ENCODE measurements at regions of chr11 and their contacts with region 1.

Region 1: GRCh38 chr11:60970369-60970774 is 1.1 kb upstream of the CD6 start:
- DNase-seq: peak; percentile 68
- ATAC-seq: peak; percentile 91
- H3K4me3 Mint-ChIP-seq: no peak overlapping the region
- H3K27ac Mint-ChIP-seq: peak overlapping the region; percentile 32
- H3K4me1 Mint-ChIP-seq: peaks cover 31% of the 10 kb centered on the region
- H3K27me3 Mint-ChIP-seq: no peaks in the 10 kb centered on the region
- CTCF ChIP-seq: peak; percentile 88

Region 2: DNA sequence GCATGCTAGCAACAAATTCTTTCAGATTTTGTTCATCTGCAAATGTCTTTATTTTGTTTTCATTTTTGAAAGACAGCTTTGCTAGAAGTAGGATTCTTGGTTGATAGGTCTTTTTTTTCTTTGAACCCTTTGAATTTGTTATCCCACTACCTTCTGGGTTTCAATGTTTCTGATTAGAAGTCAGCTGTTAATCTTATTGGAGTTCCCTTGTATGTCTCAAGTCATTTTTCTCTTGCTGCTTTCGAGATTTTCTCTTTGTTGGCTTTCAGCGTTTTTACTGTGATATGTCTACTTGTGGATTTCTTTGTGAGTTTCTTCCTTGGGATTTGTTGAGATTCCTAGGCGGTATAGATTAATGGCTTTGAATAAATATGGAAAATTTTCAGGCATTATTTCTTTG is 298.1 kb before region 1 on chr11:
- CTCF ChIA-PET with region 1: no interaction called
- POLR2A ChIA-PET with region 1: no interaction called
- intact Hi-C with region 1: no loop called
- DNase-seq: no peak
- ATAC-seq: no peak
- H3K4me3 Mint-ChIP-seq: no peak overlapping the region
- H3K27ac Mint-ChIP-seq: no peak overlapping the region
- H3K4me1 Mint-ChIP-seq: no peaks in the 10 kb centered on the region
- H3K27me3 Mint-ChIP-seq: peaks cover 1% of the 10 kb centered on the region
- CTCF ChIP-seq: no peak

Region 3: GRCh38 chr11:60951899-60952741 is 18.3 kb before region 1 on chr11 and contains the start of gene SLC15A3:
- CTCF ChIA-PET with region 1: interaction called, 5 read pairs
- POLR2A ChIA-PET with region 1: interaction called, 5 read pairs
- intact Hi-C with region 1: loop called (anchors 2 kb)
- DNase-seq: peak; percentile 62
- ATAC-seq: peak; percentile 88
- H3K4me3 Mint-ChIP-seq: peak within 1 kb of the TSS; percentile 91
- H3K27ac Mint-ChIP-seq: peak within 1 kb of the TSS; percentile 91
- H3K4me1 Mint-ChIP-seq: peaks cover 57% of the 10 kb centered on the region
- H3K27me3 Mint-ChIP-seq: no peaks in the 10 kb centered on the region
- CTCF ChIP-seq: no peak
- total RNA-seq, gene SLC15A3: 76.4 and 77.8 TPM in 2 replicates

Region 4: GRCh38 chr11:61021661-61022212 is 51.4 kb after region 1 on chr11:
- CTCF ChIA-PET with region 1: interaction called, 3 read pairs
- POLR2A ChIA-PET with region 1: no interaction called
- intact Hi-C with region 1: loop called (anchors 1 kb)
- DNase-seq: peak; percentile 62
- ATAC-seq: peak; percentile 86
- H3K4me3 Mint-ChIP-seq: peak overlapping the region; percentile 74
- H3K27ac Mint-ChIP-seq: peak overlapping the region; percentile 83
- H3K4me1 Mint-ChIP-seq: peaks cover 56% of the 10 kb centered on the region
- H3K27me3 Mint-ChIP-seq: no peaks in the 10 kb centered on the region
- CTCF ChIP-seq: no peak

Region 5: DNA sequence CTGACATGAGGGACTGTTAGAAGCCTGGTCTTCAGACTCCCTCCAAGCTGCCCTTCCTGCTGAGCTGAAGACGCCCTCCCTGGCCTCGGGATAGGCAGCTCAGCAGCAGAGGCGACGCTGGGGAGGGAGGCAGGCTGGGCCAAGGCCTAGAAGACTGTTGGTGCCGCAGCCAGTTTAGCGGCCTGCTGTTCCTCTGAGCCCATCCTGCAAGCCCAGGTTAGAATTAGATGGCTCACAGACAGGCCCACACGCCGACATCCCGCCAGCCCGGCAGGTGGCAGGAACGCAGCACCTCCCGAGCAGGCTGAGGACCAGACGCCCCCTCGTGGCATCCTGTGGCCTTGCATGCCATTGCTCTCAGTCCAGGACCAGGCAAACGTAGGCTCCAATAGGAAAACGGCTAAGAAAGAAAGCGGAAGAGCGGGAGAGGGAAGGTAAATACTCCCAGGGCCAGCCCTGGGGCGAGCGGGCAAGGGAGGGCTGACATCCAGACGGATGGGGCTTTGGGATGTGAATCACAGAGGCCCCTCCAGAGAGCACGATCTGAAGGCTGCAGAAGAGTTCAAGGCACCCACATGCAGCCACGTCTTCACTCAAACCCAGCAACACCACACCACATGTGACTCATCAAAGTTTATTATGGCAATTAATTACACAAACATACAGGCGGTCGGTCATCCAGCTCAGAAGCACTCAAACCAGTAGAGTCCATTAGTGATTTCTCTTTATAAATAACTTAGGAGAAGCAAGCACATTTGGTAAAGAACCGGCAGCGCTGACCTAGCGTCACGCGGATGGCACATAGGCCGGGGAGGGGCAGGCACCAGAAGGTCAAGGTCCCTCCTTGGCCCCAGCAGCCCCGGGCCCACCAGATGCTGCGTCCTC is 159.5 kb after region 1 on chr11:
- CTCF ChIA-PET with region 1: interaction called, 4 read pairs
- POLR2A ChIA-PET with region 1: no interaction called
- intact Hi-C with region 1: loop called (anchors 1 kb)
- DNase-seq: peak; percentile 82
- ATAC-seq: peak; percentile 100
- H3K4me3 Mint-ChIP-seq: no peak overlapping the region
- H3K27ac Mint-ChIP-seq: peak overlapping the region; percentile 6
- H3K4me1 Mint-ChIP-seq: peaks cover 8% of the 10 kb centered on the region
- H3K27me3 Mint-ChIP-seq: no peaks in the 10 kb centered on the region
- CTCF ChIP-seq: peak; percentile 96

Region 6: GRCh38 chr11:62324738-62325556 is 1354.6 kb after region 1 on chr11:
- CTCF ChIA-PET with region 1: no interaction called
- POLR2A ChIA-PET with region 1: no interaction called
- intact Hi-C with region 1: no loop called
- DNase-seq: no peak
- ATAC-seq: peak; percentile 58
- H3K4me3 Mint-ChIP-seq: no peak overlapping the region
- H3K27ac Mint-ChIP-seq: no peak overlapping the region
- H3K4me1 Mint-ChIP-seq: no peaks in the 10 kb centered on the region
- H3K27me3 Mint-ChIP-seq: peaks cover 17% of the 10 kb centered on the region
- CTCF ChIP-seq: no peak